ENCODE measurements at regions of chr3 and their contacts with region 1.

Region 1: DNA sequence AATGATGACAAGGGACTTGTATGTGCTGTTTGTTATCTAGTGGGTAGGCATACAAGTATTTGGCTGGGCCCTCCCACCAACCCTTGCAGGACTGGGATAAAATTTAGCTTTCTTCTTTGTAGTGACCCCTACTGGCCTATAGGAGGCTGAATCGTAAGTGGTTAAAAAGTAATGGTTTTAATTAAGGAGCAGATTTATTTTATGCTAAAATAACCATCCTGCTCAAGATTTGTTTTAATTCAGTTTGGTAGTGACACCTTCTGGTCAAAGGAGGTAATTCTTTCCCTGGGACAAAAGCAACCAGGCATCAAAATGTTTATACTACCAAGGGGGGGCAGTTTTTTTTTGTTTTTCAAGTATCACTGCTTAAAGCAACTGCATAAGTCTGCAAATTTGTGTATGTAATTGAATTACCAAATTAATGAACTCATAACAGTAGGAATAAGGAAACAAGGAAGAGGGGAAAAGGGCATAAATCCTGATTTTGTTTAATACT is 70.7 kb downstream of the TOP2B start:
- DNase-seq: no peak
- H3K4me3 ChIP-seq: no peak overlapping the region
- H3K27ac ChIP-seq: peak overlapping the region in 30 of 59 donors; percentile 0 to 77 (median 41)
- H3K27me3 ChIP-seq: no peaks in the 10 kb centered on the region
- CTCF ChIP-seq: peak; percentile 72 to 94 (median 86)

Region 2: GRCh38 chr3:24773798-24774197 is 820.3 kb before region 1 on chr3:
- intact Hi-C with region 1: loop called (anchors 5 kb)
- DNase-seq: peak in 9 of 10 donors; percentile 9 to 72 (median 57)
- H3K4me3 ChIP-seq: no peak overlapping the region
- H3K27ac ChIP-seq: no peak overlapping the region
- H3K27me3 ChIP-seq: no peaks in the 10 kb centered on the region
- CTCF ChIP-seq: peak; percentile 20 to 91 (median 76)

Region 3: GRCh38 chr3:24963762-24964625 is 630.1 kb before region 1 on chr3:
- intact Hi-C with region 1: loop called in 1 of 2 experiments (anchors 5 kb)
- DNase-seq: no peak
- H3K4me3 ChIP-seq: no peak overlapping the region
- H3K27ac ChIP-seq: no peak overlapping the region
- H3K27me3 ChIP-seq: no peaks in the 10 kb centered on the region
- CTCF ChIP-seq: peak; percentile 41 to 74 (median 60)

Region 4: GRCh38 chr3:25021816-25022215 is 572.2 kb before region 1 on chr3:
- intact Hi-C with region 1: loop called in 1 of 2 experiments (anchors 10 kb)
- DNase-seq: no peak
- H3K4me3 ChIP-seq: no peak overlapping the region
- H3K27ac ChIP-seq: no peak overlapping the region
- H3K27me3 ChIP-seq: no peaks in the 10 kb centered on the region
- CTCF ChIP-seq: peak in 51 of 56 donors; percentile 22 to 70 (median 47)

Region 5: DNA sequence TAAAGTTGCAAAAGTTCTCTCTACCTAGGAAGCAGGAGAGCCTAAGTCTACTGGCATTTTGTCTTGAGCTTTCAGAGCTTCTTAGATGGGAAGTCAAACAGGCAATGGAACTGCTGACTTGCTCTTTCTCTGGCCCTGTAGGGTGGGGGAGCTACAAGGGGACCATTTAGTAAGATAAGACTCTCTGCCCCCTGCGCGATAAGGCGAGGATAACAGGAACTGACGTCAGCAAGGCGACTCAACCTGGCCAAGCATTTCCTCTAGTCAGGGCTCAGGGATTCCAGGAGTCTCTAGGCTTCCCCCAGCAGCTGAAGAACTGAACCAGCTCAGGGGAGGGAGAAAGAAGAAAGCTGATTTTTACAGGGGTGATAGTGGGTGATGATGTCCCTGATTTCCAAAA is 160.2 kb before region 1 on chr3:
- intact Hi-C with region 1: loop called in 1 of 2 experiments (anchors 10 kb)
- DNase-seq: no peak
- H3K4me3 ChIP-seq: peak overlapping the region in 16 of 59 donors; percentile 4 to 83 (median 72)
- H3K27ac ChIP-seq: peak overlapping the region in 35 of 59 donors; percentile 1 to 93 (median 41)
- H3K27me3 ChIP-seq: no peaks in the 10 kb centered on the region
- CTCF ChIP-seq: no peak

Region 6: DNA sequence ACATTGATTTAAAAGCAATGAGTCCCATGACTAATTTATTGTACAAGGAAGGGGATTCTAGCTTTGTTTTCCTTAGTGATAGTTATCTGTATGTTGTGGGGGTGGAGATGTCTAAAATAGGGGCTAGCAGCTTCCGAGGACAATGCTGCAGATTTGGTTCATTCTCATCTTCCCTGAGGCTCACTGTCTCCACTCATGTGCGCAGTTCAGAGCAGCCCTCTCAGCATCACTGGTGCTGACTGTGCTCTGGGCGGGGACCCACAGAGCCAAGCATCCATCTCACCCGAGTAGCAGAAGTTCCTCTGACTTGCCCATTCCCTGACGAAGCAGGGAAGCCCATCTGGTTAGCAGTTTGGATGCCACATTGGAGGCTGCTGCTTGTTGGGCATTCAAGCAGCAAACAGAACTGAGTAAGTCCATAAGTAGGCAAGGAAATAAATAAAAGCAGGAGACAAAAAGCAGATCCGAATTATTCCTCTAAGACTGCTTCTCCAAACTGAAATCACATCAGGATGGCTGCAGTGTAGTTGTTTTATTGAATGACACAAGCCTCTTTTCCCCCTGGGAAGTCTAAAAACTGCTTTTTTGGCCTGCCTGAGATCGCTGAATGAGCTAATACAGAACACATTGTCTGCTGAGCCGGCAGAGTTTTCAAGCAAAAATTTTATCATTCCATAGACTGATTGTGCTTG is 138.5 kb before region 1 on chr3:
- intact Hi-C with region 1: loop called in 1 of 2 experiments (anchors 10 kb)
- DNase-seq: peak in 8 of 10 donors; percentile 46 to 81 (median 62)
- H3K4me3 ChIP-seq: peak overlapping the region in 15 of 59 donors; percentile 0 to 36 (median 16)
- H3K27ac ChIP-seq: peak overlapping the region in 56 of 59 donors; percentile 22 to 87 (median 73)
- H3K27me3 ChIP-seq: no peaks in the 10 kb centered on the region
- CTCF ChIP-seq: no peak

Measured in dorsolateral prefrontal cortex (tissue), 120 donors.